ENCODE measurements at regions of chr2 and their contacts with region 1.

Region 1: GRCh38 chr2:55718165-55719008 is 24.7 kb upstream of the PNPT1 start:
- DNase-seq: peak; percentile 63
- CTCF ChIP-seq: peak; percentile 78

Region 2: GRCh38 chr2:55668956-55669355 is 49.4 kb before region 1 on chr2:
- CTCF ChIA-PET with region 1: no interaction called
- POLR2A ChIA-PET with region 1: no interaction called
- DNase-seq: no peak
- CTCF ChIP-seq: no peak

Region 3: DNA sequence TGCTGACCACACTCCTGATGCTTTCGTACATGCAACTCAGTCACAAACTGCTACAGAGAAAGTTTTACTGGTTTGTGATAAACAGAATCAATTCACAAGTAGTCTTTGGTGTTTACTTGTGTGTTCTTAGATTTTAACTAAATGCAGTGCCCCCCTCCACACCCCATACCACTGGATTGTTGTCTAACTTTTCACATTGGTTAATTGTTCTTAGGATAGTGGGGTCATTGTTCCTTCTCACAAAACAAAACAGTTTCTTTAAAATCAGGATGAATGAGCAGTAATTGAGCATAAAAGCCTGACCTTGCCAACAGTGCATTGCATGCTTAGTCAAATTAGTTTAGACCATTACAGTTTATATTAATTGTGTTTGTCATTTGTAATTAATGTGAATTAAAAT is 10.6 kb before region 1 on chr2:
- CTCF ChIA-PET with region 1: interaction called, 16 read pairs
- POLR2A ChIA-PET with region 1: no interaction called
- DNase-seq: no peak
- CTCF ChIP-seq: no peak

Region 4: GRCh38 chr2:55732854-55733253 is 14.5 kb after region 1 on chr2:
- CTCF ChIA-PET with region 1: interaction called, 13 read pairs
- POLR2A ChIA-PET with region 1: no interaction called
- DNase-seq: no peak
- CTCF ChIP-seq: no peak

Region 5: GRCh38 chr2:55961318-55961911 is 243.0 kb after region 1 on chr2:
- CTCF ChIA-PET with region 1: interaction called, 58 read pairs
- POLR2A ChIA-PET with region 1: no interaction called
- DNase-seq: peak; percentile 22
- CTCF ChIP-seq: peak; percentile 45

Region 6: DNA sequence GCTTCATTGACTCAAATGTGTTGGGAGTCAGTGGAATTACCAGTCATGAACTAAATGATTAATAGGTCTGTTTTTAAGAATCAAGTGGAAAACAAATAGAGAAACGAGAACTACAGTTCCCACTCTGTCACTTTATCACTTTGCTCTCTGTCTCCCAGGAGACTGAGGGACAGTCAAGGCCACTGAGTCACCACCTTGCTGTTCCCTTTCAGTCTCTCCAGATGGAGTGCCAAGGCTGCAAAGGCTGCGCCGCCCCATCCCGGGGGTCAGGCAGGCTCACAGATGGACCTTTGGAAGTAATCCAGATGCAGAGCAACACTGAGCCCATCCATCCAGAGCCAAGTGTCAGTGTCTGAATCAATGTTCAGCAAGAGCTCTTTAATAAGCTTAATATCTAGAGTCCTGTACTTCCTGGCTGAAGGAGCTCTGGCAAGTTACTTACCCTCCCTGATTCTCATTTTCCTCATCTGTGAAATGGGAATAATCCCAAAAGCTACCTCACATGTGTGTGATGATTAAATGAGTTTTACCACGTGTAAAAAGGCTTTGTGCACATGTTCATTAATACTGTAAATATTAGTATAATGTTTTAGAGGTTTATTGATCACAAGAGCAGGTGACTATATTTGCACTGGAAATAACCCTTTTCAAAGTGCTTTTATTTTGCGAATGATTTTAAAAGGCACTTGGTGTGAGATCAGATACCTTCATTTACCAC is 248.2 kb after region 1 on chr2:
- CTCF ChIA-PET with region 1: interaction called, 58 read pairs
- POLR2A ChIA-PET with region 1: no interaction called
- DNase-seq: no peak
- CTCF ChIP-seq: no peak